ENCODE measurements at regions of chr19 and their contacts with region 1.

Region 1: DNA sequence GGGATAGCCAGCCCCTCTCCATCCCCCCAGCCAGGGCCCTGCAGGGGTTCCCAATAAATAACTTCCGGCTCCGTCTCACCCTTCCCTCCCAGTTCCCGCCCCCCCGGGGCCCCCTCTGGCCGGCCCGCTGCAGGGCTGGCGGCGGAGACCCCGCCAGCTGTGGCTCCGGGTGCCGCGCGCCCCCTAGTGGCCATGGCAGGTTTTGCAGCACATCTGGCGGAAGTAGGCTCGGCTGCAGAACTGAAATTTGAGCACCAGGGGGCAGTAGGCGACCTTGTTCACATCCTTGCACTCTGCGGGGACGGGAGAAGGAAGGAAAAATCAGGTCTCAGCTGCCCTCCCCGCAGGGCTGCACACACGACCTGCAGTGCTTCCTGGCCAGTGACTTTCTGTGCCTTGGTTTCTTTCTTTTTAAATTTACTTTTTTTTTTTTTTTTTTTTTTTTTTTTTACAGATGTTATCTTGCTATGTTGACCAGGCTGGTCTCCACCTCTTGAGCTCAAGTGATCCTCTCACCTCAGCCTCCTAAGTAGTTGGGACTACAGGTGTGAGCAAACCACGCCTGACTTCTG is 3.6 kb upstream of the MYO1F start:
- DNase-seq: peak; percentile 83 to 87 (median 87)
- ATAC-seq: peak; percentile 83
- H3K4me3 ChIP-seq: no peak overlapping the region
- H3K27ac ChIP-seq: no peak overlapping the region
- H3K4me1 ChIP-seq: peaks cover 10 to 36% of the 10 kb centered on the region in 2 experiments
- H3K27me3 ChIP-seq: peaks cover 0 to 5% of the 10 kb centered on the region in 2 experiments; a peak in 1 of 5 replicates
- CTCF ChIP-seq: peak; percentile 99 to 100 (median 99)
- EP300 ChIP-seq: no peak
- POLR2A ChIP-seq: no peak
- RAD21 ChIP-seq: peak; percentile 89 to 90

Region 2: GRCh38 chr19:8355631-8356402 is 225.0 kb before region 1 on chr19:
- CTCF ChIA-PET with region 1: interaction called, 14 read pairs
- POLR2A ChIA-PET with region 1: no interaction called
- in situ Hi-C with region 1: no loop called
- intact Hi-C with region 1: loop called (anchors 5 kb)
- DNase-seq: peak; percentile 37 to 86 (median 57)
- ATAC-seq: peak; percentile 87
- H3K4me3 ChIP-seq: no peak overlapping the region
- H3K27ac ChIP-seq: peak overlapping the region; percentile 30; the same call in 2 of the 3 replicates
- H3K4me1 ChIP-seq: peaks cover 9 to 18% of the 10 kb centered on the region in 2 experiments; a peak in 4 of 5 replicates
- H3K27me3 ChIP-seq: peaks cover 2 to 7% of the 10 kb centered on the region in 2 experiments; a peak in 3 of 5 replicates
- CTCF ChIP-seq: peak; percentile 22 to 37 (median 27); a peak in 4 of 6 replicates
- EP300 ChIP-seq: 0 out of 2 replicates have a peak, but pooled peaks have one; percentile 14
- POLR2A ChIP-seq: no peak
- RAD21 ChIP-seq: peak in 1 of 2 experiments; percentile 57; a peak in 2 of 4 replicates

Region 3: GRCh38 chr19:8412783-8413628 is 167.8 kb before region 1 on chr19 and contains the start of gene MARCHF2:
- CTCF ChIA-PET with region 1: interaction called, 3 read pairs
- POLR2A ChIA-PET with region 1: interaction called, 3 read pairs
- in situ Hi-C with region 1: no loop called
- intact Hi-C with region 1: loop called (anchors 10 kb)
- DNase-seq: peak; percentile 97 to 99 (median 98)
- ATAC-seq: peak; percentile 99
- H3K4me3 ChIP-seq: peak within 1 kb of the TSS; percentile 53
- H3K27ac ChIP-seq: no peak within 1 kb of the TSS
- H3K4me1 ChIP-seq: peaks cover 22 to 39% of the 10 kb centered on the region in 2 experiments; a peak in 4 of 5 replicates
- H3K27me3 ChIP-seq: no peaks in the 10 kb centered on the region
- CTCF ChIP-seq: peak; percentile 58 to 80 (median 76)
- EP300 ChIP-seq: no peak
- POLR2A ChIP-seq: no peak
- RAD21 ChIP-seq: peak; percentile 52 to 58
- polyA plus RNA-seq, gene MARCHF2: 0.39 to 0.41 TPM

Region 4: GRCh38 chr19:8526345-8527067 is 54.3 kb before region 1 on chr19:
- CTCF ChIA-PET with region 1: no interaction called
- POLR2A ChIA-PET with region 1: interaction called, 3 read pairs
- in situ Hi-C with region 1: no loop called
- intact Hi-C with region 1: loop called (anchors 5 kb)
- DNase-seq: peak; percentile 84 to 92 (median 86)
- ATAC-seq: peak; percentile 82
- H3K4me3 ChIP-seq: peak overlapping the region; percentile 78
- H3K27ac ChIP-seq: peak overlapping the region; percentile 74; the same call in 2 of the 3 replicates
- H3K4me1 ChIP-seq: peaks cover 0 to 27% of the 10 kb centered on the region in 2 experiments; a peak in 3 of 5 replicates
- H3K27me3 ChIP-seq: peaks cover 0 to 13% of the 10 kb centered on the region in 2 experiments; a peak in 2 of 5 replicates
- CTCF ChIP-seq: no peak
- EP300 ChIP-seq: no peak
- POLR2A ChIP-seq: peak; percentile 71
- RAD21 ChIP-seq: no peak

Region 5: DNA sequence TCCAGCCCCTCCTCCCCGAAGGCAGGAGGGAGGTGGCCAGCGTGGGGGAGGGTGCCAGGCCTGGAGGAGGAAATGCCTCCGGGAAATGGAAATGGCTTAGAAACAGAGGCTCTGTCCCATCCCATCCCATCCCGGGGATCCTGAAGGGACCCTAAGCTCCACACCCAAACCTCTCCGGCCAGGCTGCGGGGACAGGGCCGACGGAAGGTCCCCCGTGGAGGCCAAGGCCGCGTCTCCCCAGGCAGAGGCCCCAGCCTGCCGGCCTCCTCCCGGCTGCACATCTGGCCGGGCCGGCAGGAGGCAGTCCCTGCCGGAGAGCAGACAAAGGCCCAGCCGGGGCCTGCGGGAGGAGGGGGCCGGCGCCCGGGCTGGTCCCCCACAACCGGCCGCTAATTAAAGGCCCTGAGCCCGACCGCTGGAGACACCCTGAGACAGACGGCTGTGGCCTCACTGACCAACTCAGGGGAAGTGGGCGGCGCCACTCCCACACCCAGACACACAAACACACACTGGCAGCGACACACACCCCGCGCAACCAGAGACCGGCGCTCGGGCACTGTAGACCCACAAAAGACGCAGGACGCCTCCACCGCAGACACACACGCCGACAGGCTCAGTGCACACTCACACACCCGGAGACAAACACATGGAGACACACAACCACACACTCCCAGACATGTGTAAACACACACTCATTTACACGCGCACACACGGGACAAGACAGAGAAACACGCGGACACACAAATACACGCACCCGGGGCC is 28.7 kb after region 1 on chr19:
- CTCF ChIA-PET with region 1: no interaction called
- POLR2A ChIA-PET with region 1: no interaction called
- in situ Hi-C with region 1: no loop called
- intact Hi-C with region 1: no loop called
- DNase-seq: peak in 3 of 4 experiments; percentile 31 to 42 (median 32)
- ATAC-seq: peak; percentile 74
- H3K4me3 ChIP-seq: no peak overlapping the region
- H3K27ac ChIP-seq: no peak overlapping the region; the same call in 2 of the 3 replicates
- H3K4me1 ChIP-seq: peaks cover 6 to 29% of the 10 kb centered on the region in 2 experiments; a peak in 3 of 5 replicates
- H3K27me3 ChIP-seq: peaks cover 3 to 32% of the 10 kb centered on the region in 2 experiments; a peak in 4 of 5 replicates
- CTCF ChIP-seq: peak in 1 of 3 experiments; percentile 22; a peak in 1 of 6 replicates
- EP300 ChIP-seq: no peak
- POLR2A ChIP-seq: no peak
- RAD21 ChIP-seq: no peak

Measured in K562 (cell line).